ENCODE measurements at regions of chr9 and their contacts with region 1.

Region 1: GRCh38 chr9:79571309-79572031 is at the start of gene TLE4:
- DNase-seq: peak; percentile 100
- ATAC-seq: peak; percentile 90
- H3K4me3 Mint-ChIP-seq: no peak within 1 kb of the TSS
- H3K27ac Mint-ChIP-seq: peak within 1 kb of the TSS; percentile 58
- H3K4me1 Mint-ChIP-seq: peaks cover 31% of the 10 kb centered on the region
- H3K27me3 Mint-ChIP-seq: peaks cover 12% of the 10 kb centered on the region
- total RNA-seq, gene TLE4: 11.8 to 15.5 TPM

Region 2: GRCh38 chr9:78235756-78236538 is 1335.5 kb before region 1 on chr9 and contains the start of gene CEP78:
- CTCF ChIA-PET with region 1: no interaction called
- POLR2A ChIA-PET with region 1: no interaction called
- intact Hi-C with region 1: loop called in 1 of 2 experiments (anchors 5 kb)
- DNase-seq: peak; percentile 94
- ATAC-seq: peak; percentile 98
- H3K4me3 Mint-ChIP-seq: no peak within 1 kb of the TSS
- H3K27ac Mint-ChIP-seq: peak within 1 kb of the TSS; percentile 93
- H3K4me1 Mint-ChIP-seq: peaks cover 30% of the 10 kb centered on the region
- H3K27me3 Mint-ChIP-seq: no peaks in the 10 kb centered on the region
- total RNA-seq, gene CEP78: 35.0 to 39.2 TPM

Region 3: GRCh38 chr9:79471580-79472543 is 99.6 kb before region 1 on chr9:
- CTCF ChIA-PET with region 1: no interaction called
- POLR2A ChIA-PET with region 1: no interaction called
- intact Hi-C with region 1: loop called in 1 of 2 experiments (anchors 5 kb)
- DNase-seq: peak; percentile 43
- ATAC-seq: peak; percentile 36
- H3K4me3 Mint-ChIP-seq: no peak overlapping the region
- H3K27ac Mint-ChIP-seq: no peak overlapping the region
- H3K4me1 Mint-ChIP-seq: peaks cover 12% of the 10 kb centered on the region
- H3K27me3 Mint-ChIP-seq: peaks cover 2% of the 10 kb centered on the region

Region 4: GRCh38 chr9:79542735-79543620 is 28.5 kb before region 1 on chr9:
- CTCF ChIA-PET with region 1: interaction called, 4 read pairs
- POLR2A ChIA-PET with region 1: interaction called, 13 read pairs
- intact Hi-C with region 1: loop called (anchors 1 kb)
- DNase-seq: peak; percentile 9
- ATAC-seq: no peak
- H3K4me3 Mint-ChIP-seq: no peak overlapping the region
- H3K27ac Mint-ChIP-seq: peak overlapping the region; percentile 34
- H3K4me1 Mint-ChIP-seq: peaks cover 24% of the 10 kb centered on the region
- H3K27me3 Mint-ChIP-seq: peaks cover 9% of the 10 kb centered on the region

Region 5: GRCh38 chr9:79623799-79624721 is 52.6 kb after region 1 on chr9:
- CTCF ChIA-PET with region 1: no interaction called
- POLR2A ChIA-PET with region 1: interaction called, 7 read pairs
- intact Hi-C with region 1: loop called (anchors 1 kb)
- DNase-seq: peak; percentile 41
- ATAC-seq: peak; percentile 88
- H3K4me3 Mint-ChIP-seq: peak overlapping the region; percentile 0
- H3K27ac Mint-ChIP-seq: peak overlapping the region; percentile 84
- H3K4me1 Mint-ChIP-seq: peaks cover 34% of the 10 kb centered on the region
- H3K27me3 Mint-ChIP-seq: no peaks in the 10 kb centered on the region

Region 6: DNA sequence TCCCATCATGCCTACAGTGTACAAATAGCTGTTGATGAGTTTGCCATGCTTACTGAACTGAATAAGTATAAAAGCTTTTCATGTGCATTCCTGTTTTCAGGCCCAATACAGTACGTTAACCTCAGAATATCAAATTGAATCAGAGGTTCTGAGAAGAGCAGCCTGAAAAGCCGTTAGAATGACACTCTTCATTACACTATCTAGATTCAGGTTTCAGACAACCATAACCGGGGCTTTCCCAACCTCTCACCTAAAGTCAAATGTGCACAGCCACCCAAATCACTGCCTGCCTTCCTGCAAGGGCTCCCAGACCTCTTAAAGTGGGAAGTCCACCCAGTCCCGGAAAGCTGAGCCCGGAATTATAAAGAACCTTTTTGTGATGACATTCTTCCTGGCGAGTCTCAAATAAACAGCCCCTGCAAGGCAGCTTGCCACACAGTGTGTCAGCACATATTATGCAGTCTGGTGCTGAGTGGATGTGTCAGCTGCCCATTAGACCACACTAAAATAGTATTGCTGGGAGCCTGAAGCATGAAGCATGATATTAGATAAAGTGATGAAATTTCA is 246.1 kb after region 1 on chr9:
- CTCF ChIA-PET with region 1: no interaction called
- POLR2A ChIA-PET with region 1: no interaction called
- intact Hi-C with region 1: loop called (anchors 2 to 5 kb)
- DNase-seq: peak; percentile 29
- ATAC-seq: peak; percentile 85
- H3K4me3 Mint-ChIP-seq: no peak overlapping the region
- H3K27ac Mint-ChIP-seq: no peak overlapping the region
- H3K4me1 Mint-ChIP-seq: peaks cover 14% of the 10 kb centered on the region
- H3K27me3 Mint-ChIP-seq: peaks cover 6% of the 10 kb centered on the region